ENCODE measurements at regions of chr1 and their contacts with region 1.

Region 1: DNA sequence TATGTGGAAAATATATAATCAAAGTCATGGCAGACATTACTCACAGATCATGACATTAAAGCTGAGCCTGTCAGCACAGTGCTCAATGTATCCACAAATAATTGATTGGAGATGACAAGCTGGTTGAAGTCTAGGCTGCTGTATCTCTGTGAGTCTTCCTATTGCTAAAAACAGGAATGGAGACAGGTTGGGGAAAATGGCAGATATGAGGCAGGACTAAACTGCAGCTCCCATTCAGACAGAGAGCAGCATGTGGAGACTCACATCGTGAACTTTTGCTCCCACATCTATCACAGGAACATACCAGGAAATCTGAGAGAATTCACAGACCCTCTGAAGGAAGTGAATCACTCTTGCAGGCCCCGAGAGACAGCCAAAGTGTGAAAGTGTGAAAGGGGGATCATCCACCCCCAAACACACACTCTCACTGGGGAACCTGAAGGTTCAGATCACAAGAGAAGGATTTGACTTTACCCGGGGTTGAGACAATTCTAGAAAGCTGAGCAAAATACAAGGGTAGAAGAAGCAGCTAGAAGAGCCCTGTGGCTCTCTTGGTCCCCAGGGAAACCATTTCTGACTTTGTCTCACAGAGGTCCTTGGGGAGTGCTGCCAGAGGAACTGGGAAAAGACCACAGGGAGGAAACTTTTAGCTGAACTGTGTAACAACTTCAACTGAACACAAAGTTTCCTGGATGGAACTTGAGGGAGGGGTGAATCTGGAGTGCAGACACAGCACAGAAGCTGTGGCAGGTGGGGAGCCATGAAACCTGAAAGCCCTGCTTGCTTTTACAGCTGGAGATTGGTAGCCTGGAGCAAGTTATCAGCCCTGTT is 173.4 kb downstream of the S1PR1 start:
- DNase-seq: peak; percentile 20
- CTCF ChIP-seq: no peak

Region 2: GRCh38 chr1:101357444-101357986 is 52.7 kb before region 1 on chr1:
- CTCF ChIA-PET with region 1: interaction called, 11 read pairs
- POLR2A ChIA-PET with region 1: no interaction called
- DNase-seq: peak; percentile 82
- CTCF ChIP-seq: peak; percentile 79

Region 3: GRCh38 chr1:101379950-101380349 is 30.3 kb before region 1 on chr1:
- CTCF ChIA-PET with region 1: interaction called, 121 read pairs
- POLR2A ChIA-PET with region 1: interaction called, 75 read pairs
- DNase-seq: peak; percentile 35
- CTCF ChIP-seq: no peak

Region 4: DNA sequence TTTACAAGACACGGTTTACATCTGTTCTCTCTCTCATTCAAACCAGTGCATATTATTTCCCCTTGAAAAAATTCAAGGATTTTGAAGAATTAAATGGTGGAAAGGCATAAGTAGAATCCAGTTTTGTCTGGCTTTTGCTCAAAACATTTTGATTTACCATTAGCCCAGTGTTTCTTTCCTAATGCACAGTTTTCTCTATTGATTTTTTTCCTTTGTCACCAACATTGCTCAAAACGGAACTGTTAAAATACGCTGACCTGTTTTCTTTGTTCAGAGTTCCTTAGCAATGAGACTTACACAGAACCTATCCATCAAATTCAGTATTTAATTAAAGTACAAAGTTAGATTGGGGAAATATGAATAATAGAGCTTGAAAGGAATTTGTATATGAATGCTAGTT is 11.0 kb before region 1 on chr1:
- CTCF ChIA-PET with region 1: interaction called, 121 read pairs
- POLR2A ChIA-PET with region 1: no interaction called
- DNase-seq: no peak
- CTCF ChIP-seq: no peak

Region 5: GRCh38 chr1:101428544-101428943 is 18.3 kb after region 1 on chr1:
- CTCF ChIA-PET with region 1: interaction called, 24 read pairs
- POLR2A ChIA-PET with region 1: no interaction called
- DNase-seq: no peak
- CTCF ChIP-seq: no peak

Measured in GM10248 (cell line).